Panc1 (cell line): ENCODE measurements at regions of chr3 and their contacts with region 1.

Region 1: DNA sequence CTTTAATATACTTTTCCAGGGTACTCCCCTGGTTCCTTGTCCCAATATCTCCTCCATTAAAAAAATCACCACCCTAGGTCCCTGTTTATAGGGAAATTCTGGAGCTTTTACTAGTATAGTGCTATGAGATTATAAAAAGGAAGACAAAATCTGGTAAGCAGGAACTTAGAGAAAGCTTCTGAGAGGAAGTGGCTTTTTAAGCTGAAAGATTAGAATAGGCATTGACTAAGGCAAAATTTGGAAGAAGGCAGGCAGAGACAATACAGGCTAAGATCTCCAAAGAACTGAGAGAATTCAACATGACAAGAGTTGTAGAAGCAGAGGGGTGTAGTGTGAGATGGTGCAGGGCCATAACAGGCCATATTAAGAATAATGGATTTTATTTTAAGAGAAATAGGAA is 25.8 kb downstream of the SGO1 start:
- DNase-seq: no peak
- ATAC-seq: no peak
- H3K4me3 ChIP-seq: no peak overlapping the region
- H3K27ac ChIP-seq: no peak overlapping the region
- H3K4me1 ChIP-seq: no peaks in the 10 kb centered on the region
- H3K27me3 ChIP-seq: no peaks in the 10 kb centered on the region
- CTCF ChIP-seq: no peak

Region 2: DNA sequence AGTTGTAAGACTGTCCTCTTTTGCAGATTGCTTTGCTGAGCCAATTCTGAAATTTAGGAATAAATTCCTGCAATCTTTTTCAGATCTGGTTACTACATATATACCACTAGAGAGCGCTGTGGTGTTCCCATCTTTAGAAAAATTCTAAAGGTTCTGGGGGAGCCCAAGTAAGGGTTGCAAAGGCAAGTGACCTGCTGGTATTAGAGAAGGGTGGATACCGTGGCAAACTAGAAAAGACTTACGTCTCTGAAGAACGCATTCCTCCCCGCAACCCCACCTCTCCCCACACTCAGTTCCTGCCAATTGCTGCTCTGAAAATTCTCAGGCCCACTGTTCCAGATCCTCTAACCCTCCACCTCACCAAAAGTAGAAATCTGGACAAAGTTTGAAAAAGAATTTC is 274.8 kb before region 1 on chr3:
- CTCF ChIA-PET with region 1: no interaction called
- POLR2A ChIA-PET with region 1: no interaction called
- in situ Hi-C with region 1: no loop called
- intact Hi-C with region 1: loop called (anchors 10 kb)
- DNase-seq: no peak
- ATAC-seq: no peak
- H3K4me3 ChIP-seq: no peak overlapping the region
- H3K27ac ChIP-seq: no peak overlapping the region
- H3K4me1 ChIP-seq: peaks cover 7% of the 10 kb centered on the region; the same call in 1 of the 2 replicates
- H3K27me3 ChIP-seq: no peaks in the 10 kb centered on the region
- CTCF ChIP-seq: peak; percentile 64